ENCODE measurements at regions of chr1 and their contacts with region 1.

Region 1: DNA sequence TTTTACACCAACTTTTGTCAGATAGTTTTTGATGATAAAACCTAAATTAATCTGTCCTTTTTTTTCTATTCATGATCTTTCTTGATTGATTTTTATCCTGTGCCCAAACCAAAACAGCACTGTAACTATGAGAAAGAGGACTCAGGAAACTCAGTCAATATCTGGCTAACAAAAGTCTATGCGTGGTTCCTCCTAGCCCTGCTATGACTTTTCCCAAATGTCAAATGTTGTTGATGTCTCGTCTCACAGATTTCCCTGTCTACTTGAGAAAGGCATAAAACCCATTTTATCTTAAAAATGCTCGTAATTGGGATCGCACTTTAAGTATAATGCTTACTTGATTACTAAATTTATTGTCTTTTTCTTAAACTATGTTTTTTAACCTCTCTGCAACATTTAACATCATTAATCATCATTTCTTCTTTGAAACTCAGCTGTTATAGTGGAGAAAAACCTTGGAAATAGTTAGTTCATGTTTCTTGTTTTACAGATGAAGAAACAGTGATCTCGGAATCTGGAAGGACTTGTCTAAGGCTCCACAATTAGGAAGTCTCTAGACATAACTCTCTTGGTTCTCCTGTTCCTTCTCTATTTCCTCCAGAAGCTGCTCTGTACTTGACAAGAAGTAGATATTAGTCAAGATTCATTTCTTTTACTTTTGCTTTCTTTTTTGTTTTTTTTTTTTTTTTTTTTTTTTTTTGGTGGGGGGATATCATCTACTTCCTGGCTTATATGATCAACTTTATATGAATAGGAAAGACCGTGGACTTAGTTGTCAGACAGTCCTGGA is 26.2 kb upstream of the PTPRC start:
- DNase-seq: no peak
- H3K4me3 Mint-ChIP-seq: peak overlapping the region; percentile 78
- H3K27ac Mint-ChIP-seq: peak overlapping the region; percentile 88
- H3K4me1 Mint-ChIP-seq: peaks cover 67% of the 10 kb centered on the region
- H3K27me3 Mint-ChIP-seq: no peaks in the 10 kb centered on the region

Region 2: DNA sequence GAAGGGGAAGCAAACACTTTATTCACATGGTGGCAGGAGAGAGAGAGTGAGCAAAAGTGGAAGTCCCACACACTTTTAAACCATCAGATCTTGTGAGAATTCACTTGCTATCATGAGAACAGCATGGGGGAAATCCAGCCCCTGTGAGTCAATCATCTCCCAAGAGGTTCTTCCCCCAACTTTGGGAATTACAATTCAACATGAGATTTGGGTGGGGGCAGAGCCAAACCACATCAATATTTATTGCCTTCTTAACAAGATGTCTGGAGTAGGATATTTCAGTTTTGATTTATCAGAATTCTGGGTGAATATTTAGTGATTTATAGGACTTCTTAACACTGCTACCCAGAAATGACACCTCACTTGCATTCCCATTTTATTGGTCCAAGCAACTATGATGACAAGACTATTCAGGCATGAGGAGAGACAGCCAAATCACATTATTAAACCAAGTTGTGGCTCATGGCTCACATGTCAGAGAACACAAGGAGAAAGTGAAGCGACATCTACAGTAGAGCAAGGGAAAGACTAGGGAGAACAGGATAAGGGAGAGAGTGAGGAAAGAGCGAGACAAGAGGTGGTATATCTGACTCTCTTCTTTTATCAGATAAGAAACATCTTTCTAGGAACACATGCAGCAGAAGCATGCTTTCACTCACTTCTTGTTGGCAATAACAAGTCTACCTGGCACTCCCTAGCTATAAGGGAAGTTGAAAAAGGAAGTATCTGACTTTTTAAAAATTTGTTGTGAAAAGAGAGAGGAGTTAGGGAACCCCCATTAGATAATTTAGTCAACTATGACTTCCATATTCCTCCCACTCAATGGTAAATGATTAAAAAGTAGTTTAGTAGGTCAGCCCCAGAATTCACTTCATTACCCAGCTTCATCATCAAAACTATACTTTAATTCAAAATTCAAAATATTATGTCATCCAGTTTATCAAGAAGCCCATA is 10.5 kb before region 1 on chr1:
- intact Hi-C with region 1: loop called (anchors 1 kb)
- DNase-seq: no peak
- H3K4me3 Mint-ChIP-seq: no peak overlapping the region
- H3K27ac Mint-ChIP-seq: peak overlapping the region; percentile 62
- H3K4me1 Mint-ChIP-seq: peaks cover 61% of the 10 kb centered on the region
- H3K27me3 Mint-ChIP-seq: no peaks in the 10 kb centered on the region